Activated naive CD4-positive, alpha-beta T cell treated with anti-CD3 and anti-CD28 coated beads for 36 hours (primary cell): ENCODE measurements at regions of chr5 and their contacts with region 1.

Region 1: DNA sequence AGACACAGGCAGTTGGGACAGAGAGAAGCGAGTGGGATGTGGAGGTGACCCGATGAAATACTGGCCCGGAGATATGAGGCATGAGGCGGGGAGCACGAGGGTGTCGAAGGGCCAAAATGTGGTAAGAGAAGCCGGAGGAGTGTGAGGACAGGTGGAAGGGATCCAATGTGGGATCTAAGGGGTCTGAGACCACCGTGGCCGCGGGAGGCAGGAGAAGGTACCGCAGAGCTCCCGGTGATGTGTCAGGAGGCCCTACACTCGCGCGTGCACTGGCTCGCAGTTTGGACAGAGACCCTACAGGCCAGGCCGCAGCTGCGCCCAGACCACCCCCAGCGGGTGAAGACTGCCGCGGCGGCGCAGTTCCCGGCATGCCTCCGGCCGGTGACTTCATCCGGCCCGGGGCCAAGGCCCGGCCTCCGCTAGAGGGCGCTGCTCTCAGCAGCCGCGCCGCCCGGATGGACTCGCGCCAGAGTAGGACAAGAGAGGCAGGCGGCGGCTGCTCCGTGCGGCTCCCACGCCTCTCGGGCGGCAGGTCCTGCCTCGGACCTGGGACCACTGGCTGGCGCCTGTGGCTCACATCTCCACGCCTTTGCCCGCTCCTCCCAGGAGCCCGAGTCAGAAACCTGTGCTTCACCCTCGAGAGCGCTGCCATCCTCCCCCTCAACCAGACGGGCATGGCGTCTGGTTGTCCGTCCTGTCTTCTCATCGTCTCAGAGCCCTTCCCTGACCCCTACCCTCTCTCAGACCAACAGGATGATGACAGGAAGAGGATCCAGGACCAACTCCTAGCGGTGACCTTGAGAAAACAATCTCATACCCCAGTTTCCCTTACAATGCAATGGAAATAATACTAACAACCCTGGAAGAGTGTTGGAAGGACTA is 35.4 kb upstream of the STING1 start:
- DNase-seq: peak; percentile 92
- H3K4me3 Mint-ChIP-seq: peak overlapping the region; percentile 92
- H3K27ac Mint-ChIP-seq: peak overlapping the region; percentile 91
- H3K4me1 Mint-ChIP-seq: peaks cover 26% of the 10 kb centered on the region
- H3K27me3 Mint-ChIP-seq: no peaks in the 10 kb centered on the region

Region 2: GRCh38 chr5:139157552-139157951 is 360.4 kb before region 1 on chr5:
- CTCF ChIA-PET with region 1: no interaction called
- intact Hi-C with region 1: no loop called
- DNase-seq: no peak
- H3K4me3 Mint-ChIP-seq: no peak overlapping the region
- H3K27ac Mint-ChIP-seq: no peak overlapping the region
- H3K4me1 Mint-ChIP-seq: no peaks in the 10 kb centered on the region
- H3K27me3 Mint-ChIP-seq: no peaks in the 10 kb centered on the region

Region 3: DNA sequence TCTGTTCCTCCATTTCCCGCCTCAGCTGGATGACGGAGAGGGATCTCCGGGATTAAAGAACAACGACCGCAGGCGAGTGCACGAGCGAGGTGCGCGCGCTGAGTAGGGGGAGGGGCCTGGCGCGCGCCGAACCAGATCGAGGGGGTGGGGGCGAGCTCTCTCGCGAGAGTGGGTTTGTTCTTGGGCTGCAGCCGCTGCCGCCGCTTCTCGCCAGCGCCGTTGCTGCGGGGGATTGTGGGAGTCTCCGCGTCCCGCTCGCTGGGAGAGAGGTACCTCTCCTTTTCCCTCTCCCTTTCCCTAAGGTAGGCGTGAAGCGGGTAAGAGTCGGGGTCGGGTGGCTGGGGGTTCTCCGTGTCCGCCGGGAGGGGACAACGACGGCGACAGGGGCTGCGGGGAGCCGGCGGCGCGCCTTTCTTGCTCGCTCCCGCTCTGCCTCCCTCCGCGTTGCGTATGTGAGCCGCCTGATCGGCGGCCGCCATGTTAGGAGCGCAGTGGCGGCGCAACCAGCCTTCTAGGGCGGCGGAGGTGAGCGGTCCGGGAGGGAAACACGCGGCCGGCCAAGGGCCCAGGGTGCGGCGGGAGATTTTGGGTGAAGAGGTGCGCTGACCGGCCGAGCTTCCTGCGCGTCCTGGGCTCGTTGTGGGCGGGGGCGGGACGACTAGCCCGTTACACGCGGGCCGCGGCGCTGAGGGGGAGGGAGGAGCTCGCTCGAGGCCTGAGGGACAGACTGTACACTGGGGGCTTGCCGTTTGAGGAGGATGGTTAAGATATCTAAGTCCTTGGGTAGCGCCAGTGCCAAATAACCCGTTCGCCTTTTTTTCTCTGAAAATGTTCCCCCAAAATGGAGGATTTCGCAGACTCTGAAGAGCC is 224.2 kb before region 1 on chr5 and contains the start of gene MATR3:
- CTCF ChIA-PET with region 1: no interaction called
- intact Hi-C with region 1: loop called (anchors 5 kb)
- DNase-seq: peak; percentile 96
- H3K4me3 Mint-ChIP-seq: peak within 1 kb of the TSS; percentile 89
- H3K27ac Mint-ChIP-seq: peak within 1 kb of the TSS; percentile 97
- H3K4me1 Mint-ChIP-seq: peaks cover 37% of the 10 kb centered on the region
- H3K27me3 Mint-ChIP-seq: no peaks in the 10 kb centered on the region
- total RNA-seq, gene MATR3: 137 to 164 TPM

Region 4: GRCh38 chr5:139422307-139422893 is 95.5 kb before region 1 on chr5:
- CTCF ChIA-PET with region 1: interaction called, 326 read pairs
- intact Hi-C with region 1: loop called (anchors 1 kb)
- DNase-seq: peak; percentile 77
- H3K4me3 Mint-ChIP-seq: no peak overlapping the region
- H3K27ac Mint-ChIP-seq: no peak overlapping the region
- H3K4me1 Mint-ChIP-seq: peaks cover 5% of the 10 kb centered on the region
- H3K27me3 Mint-ChIP-seq: no peaks in the 10 kb centered on the region

Region 5: DNA sequence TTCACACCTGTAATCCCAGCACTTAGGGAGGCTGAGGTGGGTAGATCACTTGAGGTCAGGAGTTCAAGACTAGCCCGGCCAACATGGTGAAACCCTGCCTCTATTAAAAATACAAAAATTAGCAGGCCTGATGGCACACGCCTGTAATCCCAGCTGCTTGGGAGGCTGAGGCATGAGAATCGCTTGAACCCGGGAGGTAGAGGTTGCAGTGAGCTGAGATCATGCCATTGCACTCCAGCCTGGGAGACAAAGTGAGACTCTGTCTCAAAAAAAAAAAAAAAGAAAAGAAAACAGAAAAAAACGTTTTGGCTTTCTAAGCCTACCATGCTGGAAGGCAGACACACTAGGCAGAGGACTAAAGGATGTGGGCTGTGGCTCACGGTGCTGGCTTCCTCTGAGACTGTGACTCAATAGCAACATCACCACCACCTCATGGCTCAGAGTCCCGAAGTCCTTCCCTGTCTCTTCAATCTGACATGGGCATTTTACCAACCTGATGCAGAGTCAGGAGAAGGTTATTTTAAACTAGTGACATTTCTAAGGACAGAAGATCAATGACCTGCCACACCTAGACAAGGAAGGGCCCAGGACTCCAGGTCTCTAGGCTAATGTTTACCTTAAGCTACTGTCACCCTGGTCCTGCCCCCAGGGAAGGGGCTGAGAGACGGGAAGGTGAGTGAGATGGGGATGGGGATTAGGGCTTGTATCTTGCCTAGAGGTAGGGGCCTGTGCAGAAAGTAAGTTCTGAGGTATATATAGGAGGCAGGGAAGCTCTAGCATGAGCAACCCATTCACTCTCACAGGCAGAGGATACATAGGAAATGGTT is 59.1 kb before region 1 on chr5:
- CTCF ChIA-PET with region 1: interaction called, 9 read pairs
- intact Hi-C with region 1: loop called (anchors 2 kb)
- DNase-seq: peak; percentile 93
- H3K4me3 Mint-ChIP-seq: peak overlapping the region; percentile 50
- H3K27ac Mint-ChIP-seq: peak overlapping the region; percentile 94
- H3K4me1 Mint-ChIP-seq: peaks cover 54% of the 10 kb centered on the region
- H3K27me3 Mint-ChIP-seq: no peaks in the 10 kb centered on the region

Region 6: GRCh38 chr5:139495638-139496435 is 22.1 kb before region 1 on chr5:
- CTCF ChIA-PET with region 1: interaction called, 28 read pairs
- intact Hi-C with region 1: no loop called
- DNase-seq: peak; percentile 46
- H3K4me3 Mint-ChIP-seq: no peak overlapping the region
- H3K27ac Mint-ChIP-seq: no peak overlapping the region
- H3K4me1 Mint-ChIP-seq: peaks cover 23% of the 10 kb centered on the region
- H3K27me3 Mint-ChIP-seq: no peaks in the 10 kb centered on the region

Region 7: GRCh38 chr5:139670369-139671095 is 152.6 kb after region 1 on chr5:
- CTCF ChIA-PET with region 1: no interaction called
- intact Hi-C with region 1: no loop called
- DNase-seq: peak; percentile 60
- H3K4me3 Mint-ChIP-seq: no peak overlapping the region
- H3K27ac Mint-ChIP-seq: no peak overlapping the region
- H3K4me1 Mint-ChIP-seq: peaks cover 28% of the 10 kb centered on the region
- H3K27me3 Mint-ChIP-seq: peaks cover 12% of the 10 kb centered on the region

Region 8: GRCh38 chr5:139765409-139766217 is 247.7 kb after region 1 on chr5:
- CTCF ChIA-PET with region 1: interaction called, 3 read pairs
- intact Hi-C with region 1: loop called (anchors 1 kb)
- DNase-seq: peak; percentile 86
- H3K4me3 Mint-ChIP-seq: peak overlapping the region; percentile 62
- H3K27ac Mint-ChIP-seq: no peak overlapping the region
- H3K4me1 Mint-ChIP-seq: peaks cover 8% of the 10 kb centered on the region
- H3K27me3 Mint-ChIP-seq: peaks cover 24% of the 10 kb centered on the region

Region 9: DNA sequence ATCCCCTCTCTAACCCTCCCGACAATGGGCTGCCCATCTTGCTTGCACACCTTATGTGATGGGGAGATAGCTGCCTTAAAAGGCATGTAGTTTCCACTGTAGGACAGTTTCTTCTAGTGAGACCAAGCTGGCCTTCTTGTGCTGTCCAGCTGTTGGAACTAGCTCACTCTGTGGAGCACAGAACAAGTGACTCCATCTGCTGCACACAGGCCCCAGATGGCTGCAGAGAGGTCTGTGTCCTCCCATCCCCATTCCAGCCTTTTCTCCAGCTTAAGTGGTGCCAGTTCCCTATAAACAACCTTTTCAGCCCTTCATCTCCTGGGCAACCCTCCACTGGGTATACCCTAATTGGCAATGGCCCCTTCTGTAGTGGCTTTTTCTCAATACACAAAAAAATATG is 258.9 kb after region 1 on chr5:
- CTCF ChIA-PET with region 1: no interaction called
- intact Hi-C with region 1: no loop called
- DNase-seq: no peak
- H3K4me3 Mint-ChIP-seq: no peak overlapping the region
- H3K27ac Mint-ChIP-seq: no peak overlapping the region
- H3K4me1 Mint-ChIP-seq: peaks cover 8% of the 10 kb centered on the region
- H3K27me3 Mint-ChIP-seq: no peaks in the 10 kb centered on the region